ENCODE measurements at regions of chr16 and their contacts with region 1.

Region 1: DNA sequence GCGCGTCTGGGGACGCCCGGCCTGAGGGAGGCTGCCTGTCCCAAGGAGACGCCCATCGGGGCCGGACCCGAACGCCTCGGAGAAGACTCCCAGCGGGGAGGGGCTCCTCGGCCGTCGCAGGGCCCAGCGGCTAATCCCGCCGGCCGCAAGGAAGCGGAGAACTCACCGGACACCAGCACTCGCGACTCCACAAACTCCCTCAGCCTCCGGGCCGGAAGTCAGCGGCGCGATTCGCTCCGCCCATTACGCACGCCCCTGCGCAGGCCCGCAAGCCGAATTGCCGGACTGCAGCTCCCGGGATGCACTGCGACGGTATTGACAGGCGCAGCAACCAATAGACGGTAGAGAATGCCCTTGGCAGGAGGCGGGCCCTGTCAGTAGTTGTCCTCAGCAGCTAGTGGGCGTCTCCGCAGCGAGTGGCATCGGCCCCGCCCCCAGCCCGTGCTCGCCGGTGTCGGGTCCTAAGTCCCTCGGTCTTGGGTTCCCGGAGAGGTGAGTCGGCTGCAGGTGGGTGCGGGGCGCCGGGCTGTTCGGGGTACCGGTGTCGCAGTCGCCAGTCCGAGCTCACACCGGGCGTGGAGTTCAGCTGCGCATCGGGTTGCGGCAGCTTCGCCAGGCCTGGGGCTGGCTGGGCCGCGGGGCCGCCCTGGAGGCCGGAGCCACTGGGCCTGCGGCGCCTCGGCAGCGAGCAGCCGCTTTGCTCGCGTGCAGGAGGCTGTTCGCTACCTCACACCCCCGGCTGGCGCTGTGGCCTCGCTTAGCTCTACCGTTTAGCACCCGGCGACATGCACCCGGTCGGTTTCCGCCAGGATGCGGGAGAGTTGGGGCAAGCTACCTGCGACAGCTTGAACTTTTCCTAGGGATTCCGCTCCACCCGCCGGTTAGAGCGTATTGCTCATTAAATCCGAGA is at the starts of genes ZNF174 and ZSCAN32:
- DNase-seq: peak; percentile 96 to 100 (median 99)
- ATAC-seq: peak; percentile 97
- H3K4me3 ChIP-seq: peak within 1 kb of the TSS; percentile 64 to 89
- H3K4me3 Mint-ChIP-seq: peak within 1 kb of the TSS; percentile 88
- H3K27ac ChIP-seq: peak within 1 kb of the TSS; percentile 77 to 81
- H3K27ac Mint-ChIP-seq: peak within 1 kb of the TSS; percentile 93
- H3K4me1 ChIP-seq: peaks cover 42% of the 10 kb centered on the region
- H3K4me1 Mint-ChIP-seq: peaks cover 63% of the 10 kb centered on the region
- H3K27me3 ChIP-seq: no peaks in the 10 kb centered on the region
- H3K27me3 Mint-ChIP-seq: no peaks in the 10 kb centered on the region
- CTCF ChIP-seq: no peak
- total RNA-seq, gene ZNF174: 4.5 to 6.4 TPM
- total RNA-seq, gene ZSCAN32: 10.4 to 12.7 TPM

Region 2: DNA sequence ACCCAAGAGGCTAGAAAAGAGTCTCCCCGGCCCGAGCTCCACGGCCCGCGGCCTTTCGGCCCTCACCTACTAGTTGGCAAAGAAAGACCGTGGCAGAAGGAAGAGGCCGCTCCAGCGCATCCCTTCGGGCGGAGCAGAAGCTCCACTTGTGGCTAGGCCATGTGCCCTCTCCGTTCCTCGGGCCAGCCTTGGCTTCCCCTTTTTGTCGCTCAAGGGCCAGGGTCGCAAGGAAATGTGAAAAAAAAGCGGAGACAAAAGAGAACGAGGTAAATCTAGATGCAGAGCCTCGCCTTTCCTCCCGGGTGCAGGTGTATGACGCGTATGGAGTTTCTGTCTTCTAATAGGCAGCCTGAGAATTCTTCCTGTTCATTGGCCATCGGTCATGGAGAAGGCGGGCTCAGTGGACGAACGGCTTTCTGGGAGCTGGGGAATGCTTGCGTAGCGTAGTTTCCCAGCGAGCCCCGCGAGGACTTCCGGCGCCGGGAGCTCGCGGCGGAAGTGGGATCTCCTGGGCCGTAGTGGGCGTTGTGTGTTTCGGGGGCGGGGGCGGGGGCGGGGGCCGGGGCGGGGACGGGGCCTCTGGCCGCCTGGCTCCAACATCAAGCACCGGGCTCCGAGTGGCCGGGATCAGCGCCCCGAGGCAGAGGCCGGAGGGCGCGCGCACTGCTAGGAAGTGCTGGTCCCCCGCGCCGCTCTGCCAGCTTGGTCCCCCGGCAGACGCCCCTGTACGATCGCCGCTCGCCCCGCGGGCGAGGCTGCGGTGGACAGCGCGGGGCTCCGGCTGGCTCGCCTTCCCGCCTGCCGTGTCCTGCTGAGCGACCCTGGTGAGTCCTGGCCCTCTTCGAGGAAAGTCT is 266.2 kb before region 1 on chr16 and contains the start of gene ZNF213:
- CTCF ChIA-PET with region 1: interaction called, 5 read pairs
- POLR2A ChIA-PET with region 1: no interaction called
- intact Hi-C with region 1: loop called in 1 of 2 experiments (anchors 1 kb)
- DNase-seq: peak; percentile 84 to 99 (median 92)
- ATAC-seq: peak; percentile 99
- H3K4me3 ChIP-seq: peak within 1 kb of the TSS; percentile 89 to 93
- H3K4me3 Mint-ChIP-seq: peak within 1 kb of the TSS; percentile 95
- H3K27ac ChIP-seq: peak within 1 kb of the TSS; percentile 94 to 95
- H3K27ac Mint-ChIP-seq: peak within 1 kb of the TSS; percentile 99
- H3K4me1 ChIP-seq: peaks cover 15% of the 10 kb centered on the region
- H3K4me1 Mint-ChIP-seq: peaks cover 29% of the 10 kb centered on the region
- H3K27me3 ChIP-seq: no peaks in the 10 kb centered on the region
- H3K27me3 Mint-ChIP-seq: no peaks in the 10 kb centered on the region
- CTCF ChIP-seq: peak; percentile 5
- total RNA-seq, gene ZNF213: 1.8 to 2.2 TPM

Region 3: GRCh38 chr16:3264137-3265036 is 136.6 kb before region 1 on chr16:
- CTCF ChIA-PET with region 1: no interaction called
- POLR2A ChIA-PET with region 1: interaction called, 10 read pairs
- intact Hi-C with region 1: loop called (anchors 1 kb)
- DNase-seq: peak; percentile 95 to 99 (median 97)
- ATAC-seq: peak; percentile 88
- H3K4me3 ChIP-seq: peak overlapping the region; percentile 82 to 91
- H3K4me3 Mint-ChIP-seq: peak overlapping the region; percentile 82
- H3K27ac ChIP-seq: peak overlapping the region; percentile 96 to 98
- H3K27ac Mint-ChIP-seq: peak overlapping the region; percentile 94
- H3K4me1 ChIP-seq: peaks cover 19% of the 10 kb centered on the region
- H3K4me1 Mint-ChIP-seq: peaks cover 43% of the 10 kb centered on the region
- H3K27me3 ChIP-seq: no peaks in the 10 kb centered on the region
- H3K27me3 Mint-ChIP-seq: no peaks in the 10 kb centered on the region
- CTCF ChIP-seq: no peak

Region 4: GRCh38 chr16:3364774-3365427 is 36.1 kb before region 1 on chr16:
- CTCF ChIA-PET with region 1: interaction called, 3 read pairs
- POLR2A ChIA-PET with region 1: interaction called, 26 read pairs
- intact Hi-C with region 1: loop called (anchors 1 kb)
- DNase-seq: peak; percentile 67 to 95 (median 82)
- ATAC-seq: peak; percentile 91
- H3K4me3 ChIP-seq: peak overlapping the region; percentile 46 to 62
- H3K4me3 Mint-ChIP-seq: peak overlapping the region; percentile 81
- H3K27ac ChIP-seq: peak overlapping the region; percentile 72 to 91
- H3K27ac Mint-ChIP-seq: peak overlapping the region; percentile 91
- H3K4me1 ChIP-seq: peaks cover 9% of the 10 kb centered on the region
- H3K4me1 Mint-ChIP-seq: peaks cover 11% of the 10 kb centered on the region
- H3K27me3 ChIP-seq: peaks cover 0 to 10% of the 10 kb centered on the region in 2 experiments
- H3K27me3 Mint-ChIP-seq: peaks cover 24% of the 10 kb centered on the region
- CTCF ChIP-seq: no peak

Region 5: DNA sequence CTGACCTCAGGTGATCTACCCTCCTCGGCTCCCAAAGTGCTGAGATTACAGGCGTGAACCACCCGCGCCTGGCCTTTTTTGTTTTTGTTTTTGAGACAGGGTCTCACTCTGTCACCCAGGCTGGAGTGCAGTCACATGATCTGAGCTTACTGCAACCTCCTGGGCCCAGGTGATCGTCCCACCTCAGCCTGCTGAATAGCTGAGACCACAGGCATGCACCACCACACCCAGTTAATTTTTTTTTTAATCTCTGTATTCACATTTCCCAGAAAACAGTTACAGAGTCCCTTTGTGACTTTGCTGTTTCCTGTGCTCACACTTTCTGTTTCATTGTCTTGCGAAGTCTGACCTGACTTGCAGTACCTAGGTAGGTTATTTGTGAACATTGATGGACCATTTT is 102.5 kb after region 1 on chr16:
- CTCF ChIA-PET with region 1: interaction called, 4 read pairs
- POLR2A ChIA-PET with region 1: no interaction called
- intact Hi-C with region 1: loop called (anchors 1 kb)
- DNase-seq: peak in 8 of 9 experiments; percentile 19 to 77 (median 64)
- ATAC-seq: peak; percentile 22
- H3K4me3 ChIP-seq: peak overlapping the region in 1 of 2 experiments; percentile 45
- H3K4me3 Mint-ChIP-seq: peak overlapping the region; percentile 71
- H3K27ac ChIP-seq: peak overlapping the region; percentile 50 to 71
- H3K27ac Mint-ChIP-seq: peak overlapping the region; percentile 96
- H3K4me1 ChIP-seq: peaks cover 59% of the 10 kb centered on the region
- H3K4me1 Mint-ChIP-seq: peaks cover 66% of the 10 kb centered on the region
- H3K27me3 ChIP-seq: no peaks in the 10 kb centered on the region
- H3K27me3 Mint-ChIP-seq: no peaks in the 10 kb centered on the region
- CTCF ChIP-seq: no peak

Region 6: GRCh38 chr16:4019371-4019791 is 618.3 kb after region 1 on chr16:
- CTCF ChIA-PET with region 1: no interaction called
- POLR2A ChIA-PET with region 1: no interaction called
- intact Hi-C with region 1: no loop called
- DNase-seq: peak in 2 of 9 experiments; percentile 30 to 45
- ATAC-seq: no peak
- H3K4me3 ChIP-seq: peak overlapping the region in 1 of 2 experiments; percentile 30
- H3K4me3 Mint-ChIP-seq: peak overlapping the region; percentile 57
- H3K27ac ChIP-seq: peak overlapping the region in 1 of 2 experiments; percentile 12
- H3K27ac Mint-ChIP-seq: no peak overlapping the region
- H3K4me1 ChIP-seq: no peaks in the 10 kb centered on the region
- H3K4me1 Mint-ChIP-seq: peaks cover 6% of the 10 kb centered on the region
- H3K27me3 ChIP-seq: no peaks in the 10 kb centered on the region
- H3K27me3 Mint-ChIP-seq: no peaks in the 10 kb centered on the region
- CTCF ChIP-seq: no peak

Region 7: GRCh38 chr16:4271176-4272066 is 870.4 kb after region 1 on chr16:
- CTCF ChIA-PET with region 1: no interaction called
- POLR2A ChIA-PET with region 1: no interaction called
- intact Hi-C with region 1: loop called in 1 of 2 experiments (anchors 5 kb)
- DNase-seq: peak; percentile 72 to 93 (median 89)
- ATAC-seq: peak; percentile 84
- H3K4me3 ChIP-seq: peak overlapping the region; percentile 91 to 99
- H3K4me3 Mint-ChIP-seq: peak overlapping the region; percentile 88
- H3K27ac ChIP-seq: peak overlapping the region; percentile 50 to 76
- H3K27ac Mint-ChIP-seq: peak overlapping the region; percentile 57
- H3K4me1 ChIP-seq: peaks cover 13% of the 10 kb centered on the region
- H3K4me1 Mint-ChIP-seq: peaks cover 15% of the 10 kb centered on the region
- H3K27me3 ChIP-seq: no peaks in the 10 kb centered on the region
- H3K27me3 Mint-ChIP-seq: no peaks in the 10 kb centered on the region
- CTCF ChIP-seq: no peak

Measured in CD8-positive, alpha-beta T cell (primary cell).